Heart left ventricle (tissue), 16 donors: ENCODE measurements at regions of chr4 and their contacts with region 1.

Region 1: GRCh38 chr4:52545099-52546069 is 113.7 kb downstream of the USP46 start:
- DNase-seq: peak; percentile 68 to 85 (median 77)
- ATAC-seq: peak; percentile 65 to 88 (median 80)
- H3K4me3 ChIP-seq: peak overlapping the region in 4 of 12 donors; percentile 5 to 43 (median 30)
- H3K27ac ChIP-seq: peak overlapping the region in 8 of 12 donors; percentile 0 to 95 (median 70)
- H3K4me1 ChIP-seq: peaks cover 0 to 26% (median 15%) of the 10 kb centered on the region in 12 donors
- H3K27me3 ChIP-seq: no peaks in the 10 kb centered on the region
- CTCF ChIP-seq: peak; percentile 89 to 96 (median 95)
- POLR2A ChIP-seq: no peak

Region 2: DNA sequence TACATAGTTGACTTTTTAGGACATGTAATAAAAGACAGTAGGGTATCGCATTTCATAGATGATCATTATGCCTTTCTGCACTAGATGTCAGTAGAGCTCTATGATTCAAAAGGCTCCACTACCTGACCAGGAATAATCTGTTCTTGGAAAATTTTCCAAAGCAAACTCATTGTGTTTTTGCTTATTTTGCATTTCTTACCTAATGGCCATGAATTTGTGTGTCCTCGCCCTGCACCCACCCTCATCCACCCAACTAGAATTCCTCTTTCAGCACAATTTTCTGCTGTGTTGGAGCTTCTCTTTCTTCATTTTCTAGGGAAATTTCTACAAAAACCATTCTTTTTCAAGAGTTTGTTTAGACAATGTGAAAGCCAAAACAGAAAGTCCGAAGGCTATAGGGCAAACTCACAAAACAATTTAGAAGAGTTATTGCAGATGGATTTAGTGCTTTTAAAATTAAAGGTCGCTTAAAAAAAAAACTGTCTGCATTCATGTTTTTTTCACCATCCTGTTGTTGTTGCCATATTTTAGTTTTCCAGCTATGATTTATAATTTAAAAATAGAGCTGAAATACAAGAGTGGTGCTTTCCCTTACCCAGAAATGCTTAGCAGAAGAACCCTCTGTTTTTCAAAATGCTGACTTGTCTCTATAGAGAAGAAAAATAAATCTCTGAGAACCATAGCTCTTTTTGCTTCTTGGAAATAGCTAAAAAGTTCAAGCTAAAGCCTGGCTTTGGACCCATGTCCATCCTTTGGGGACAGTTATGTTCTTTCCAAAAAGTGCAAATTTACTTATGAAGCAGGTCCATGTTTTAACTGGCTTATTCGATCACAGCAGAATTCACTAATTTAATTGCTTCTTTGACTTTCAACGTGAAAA is 310.6 kb before region 1 on chr4:
- intact Hi-C with region 1: loop called in 2 of 10 experiments (anchors 10 kb)
- DNase-seq: no peak
- ATAC-seq: peak; percentile 73 to 86 (median 78)
- H3K4me3 ChIP-seq: peak overlapping the region in 2 of 12 donors; percentile 2 to 6
- H3K27ac ChIP-seq: no peak overlapping the region
- H3K4me1 ChIP-seq: peaks cover 0 to 5% (median 0%) of the 10 kb centered on the region in 12 donors
- H3K27me3 ChIP-seq: peaks cover 0 to 3% (median 0%) of the 10 kb centered on the region in 9 donors
- CTCF ChIP-seq: peak in 11 of 12 donors; percentile 37 to 77 (median 64)
- POLR2A ChIP-seq: no peak

Region 3: GRCh38 chr4:52572936-52573485 is 27.6 kb after region 1 on chr4:
- intact Hi-C with region 1: no loop called
- DNase-seq: no peak
- ATAC-seq: no peak
- H3K4me3 ChIP-seq: no peak overlapping the region
- H3K27ac ChIP-seq: no peak overlapping the region
- H3K4me1 ChIP-seq: peaks cover 0 to 17% (median 0%) of the 10 kb centered on the region in 12 donors
- H3K27me3 ChIP-seq: no peaks in the 10 kb centered on the region
- CTCF ChIP-seq: no peak
- POLR2A ChIP-seq: no peak

Region 4: GRCh38 chr4:52588097-52588782 is 42.9 kb after region 1 on chr4:
- intact Hi-C with region 1: loop called in 5 of 10 experiments (anchors 2 to 5 kb)
- DNase-seq: peak in 2 of 5 donors; percentile 40 to 48
- ATAC-seq: peak in 3 of 4 donors; percentile 50 to 52 (median 52)
- H3K4me3 ChIP-seq: no peak overlapping the region
- H3K27ac ChIP-seq: peak overlapping the region in 10 of 12 donors; percentile 33 to 93 (median 60)
- H3K4me1 ChIP-seq: peaks cover 0 to 47% (median 19%) of the 10 kb centered on the region in 12 donors
- H3K27me3 ChIP-seq: no peaks in the 10 kb centered on the region
- CTCF ChIP-seq: peak; percentile 33 to 63 (median 54)
- POLR2A ChIP-seq: no peak

Region 5: DNA sequence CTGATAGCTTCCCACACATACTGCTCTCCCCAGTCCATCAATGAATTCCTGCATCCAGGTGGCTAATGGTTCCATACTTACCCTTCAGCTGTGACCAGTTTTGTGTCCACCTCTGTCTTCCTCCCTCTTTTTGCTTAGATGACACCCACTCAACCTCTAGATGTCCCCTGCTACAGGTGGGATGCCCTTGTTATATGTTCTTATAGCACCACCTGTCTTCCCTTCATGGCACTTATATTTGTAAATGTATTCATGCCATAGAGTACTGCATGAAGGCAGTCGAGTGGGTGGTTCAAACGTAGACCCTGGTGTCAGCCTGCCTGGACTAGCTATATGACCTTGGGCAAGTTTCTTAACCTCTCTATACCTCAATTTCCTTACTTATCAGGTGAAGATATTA is 120.2 kb after region 1 on chr4:
- intact Hi-C with region 1: loop called in 4 of 10 experiments (anchors 2 to 5 kb)
- DNase-seq: no peak
- ATAC-seq: peak; percentile 30 to 58 (median 34)
- H3K4me3 ChIP-seq: no peak overlapping the region
- H3K27ac ChIP-seq: no peak overlapping the region
- H3K4me1 ChIP-seq: peaks cover 0 to 21% (median 10%) of the 10 kb centered on the region in 12 donors
- H3K27me3 ChIP-seq: peaks cover 0 to 5% (median 0%) of the 10 kb centered on the region in 9 donors
- CTCF ChIP-seq: peak in 9 of 12 donors; percentile 9 to 48 (median 22)
- POLR2A ChIP-seq: no peak

Region 6: GRCh38 chr4:52861879-52862616 is 316.7 kb after region 1 on chr4 and contains the start of gene RASL11B:
- intact Hi-C with region 1: loop called in 5 of 10 experiments (anchors 5 to 10 kb)
- DNase-seq: peak; percentile 86 to 92 (median 91)
- ATAC-seq: peak; percentile 92 to 98 (median 98)
- H3K4me3 ChIP-seq: peak within 1 kb of the TSS; percentile 64 to 91 (median 74)
- H3K27ac ChIP-seq: peak within 1 kb of the TSS; percentile 17 to 90 (median 74)
- H3K4me1 ChIP-seq: peaks cover 0 to 48% (median 27%) of the 10 kb centered on the region in 12 donors
- H3K27me3 ChIP-seq: peaks cover 0 to 15% (median 0%) of the 10 kb centered on the region in 9 donors
- CTCF ChIP-seq: peak in 7 of 12 donors; percentile 33 to 52 (median 40)
- POLR2A ChIP-seq: peak; percentile 52 to 96
- total RNA-seq, gene RASL11B: 2.7 to 16.1 (median 5.5) TPM

Region 7: GRCh38 chr4:54233277-54233696 is 1687.9 kb after region 1 on chr4:
- intact Hi-C with region 1: loop called in 1 of 10 experiments (anchors 5 kb)
- DNase-seq: peak; percentile 85 to 92 (median 89)
- ATAC-seq: peak; percentile 64 to 88 (median 85)
- H3K4me3 ChIP-seq: peak overlapping the region; percentile 22 to 80 (median 58)
- H3K27ac ChIP-seq: peak overlapping the region in 11 of 12 donors; percentile 19 to 89 (median 68)
- H3K4me1 ChIP-seq: peaks cover 6 to 51% (median 40%) of the 10 kb centered on the region in 12 donors
- H3K27me3 ChIP-seq: peaks cover 26 to 51% (median 43%) of the 10 kb centered on the region in 9 donors
- CTCF ChIP-seq: peak; percentile 67 to 89 (median 80)
- POLR2A ChIP-seq: no peak